ENCODE measurements at regions of chr17 and their contacts with region 1.

Region 1: GRCh38 chr17:40791787-40792436 is 7.8 kb downstream of the KRT28 start:
- DNase-seq: peak; percentile 9
- H3K4me3 ChIP-seq: no peak overlapping the region
- H3K27ac ChIP-seq: no peak overlapping the region
- H3K4me1 ChIP-seq: no peaks in the 10 kb centered on the region
- H3K27me3 ChIP-seq: peaks cover 4% of the 10 kb centered on the region
- CTCF ChIP-seq: peak; percentile 71 to 82

Region 2: DNA sequence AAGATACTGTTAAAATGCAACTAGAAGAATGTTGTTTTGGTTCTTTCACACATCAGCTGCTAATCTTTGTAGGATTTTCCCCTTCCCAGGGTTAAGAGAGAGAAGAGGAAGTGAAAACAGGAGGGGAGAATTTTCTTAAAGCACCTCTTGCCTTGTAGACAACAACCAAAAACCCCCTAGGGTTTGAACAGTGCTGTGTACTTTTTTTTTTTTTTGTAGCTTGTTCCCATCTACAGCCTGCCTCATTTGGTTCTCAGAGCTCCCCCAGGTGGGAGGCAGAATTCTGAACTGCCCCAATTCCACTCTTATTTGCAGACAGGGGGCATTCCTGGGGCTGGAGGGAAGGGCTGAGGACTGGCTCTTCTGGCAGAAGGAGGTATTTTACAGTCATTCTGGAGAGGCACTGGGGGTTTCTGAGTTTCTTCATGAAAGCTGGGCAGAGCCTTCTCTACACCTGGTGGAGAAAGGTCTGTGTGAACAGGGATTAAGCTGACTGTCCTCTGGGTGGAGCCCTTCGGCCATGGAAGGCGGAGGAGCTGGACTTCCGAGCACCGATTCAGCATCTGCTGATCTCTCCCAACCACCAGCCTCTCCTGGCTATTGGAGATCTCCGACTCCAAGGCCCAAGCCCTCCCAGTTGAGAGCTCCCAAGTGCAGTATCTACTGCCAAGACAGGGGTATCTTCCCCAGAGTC is 176.5 kb before region 1 on chr17:
- CTCF ChIA-PET with region 1: interaction called, 3 read pairs
- dilution Hi-C with region 1: no loop called
- in situ Hi-C with region 1: loop called (anchors 5 kb)
- intact Hi-C with region 1: loop called (anchors 1 kb)
- DNase-seq: peak; percentile 67
- H3K4me3 ChIP-seq: no peak overlapping the region
- H3K27ac ChIP-seq: no peak overlapping the region
- H3K4me1 ChIP-seq: no peaks in the 10 kb centered on the region
- H3K27me3 ChIP-seq: no peaks in the 10 kb centered on the region
- CTCF ChIP-seq: peak; percentile 59 to 68

Region 3: DNA sequence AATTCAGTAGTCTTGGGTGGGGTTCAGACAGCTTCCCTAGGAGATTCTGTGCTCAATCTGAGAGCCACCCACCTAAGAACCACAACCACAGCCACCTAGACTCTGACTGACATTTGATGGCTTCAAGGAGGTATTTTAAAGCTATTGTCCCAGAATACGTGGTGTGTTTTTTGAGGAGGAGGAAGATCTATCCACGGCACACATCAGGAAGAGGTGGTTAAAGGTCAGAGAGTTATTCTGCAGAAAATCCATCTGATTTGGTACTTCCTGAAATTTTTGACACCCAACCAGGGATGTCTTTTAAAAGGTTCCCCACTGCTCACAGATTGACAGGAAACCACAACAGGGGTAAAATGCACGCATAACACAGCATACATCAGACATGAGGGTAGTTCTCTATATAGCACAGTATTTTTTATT is 169.4 kb before region 1 on chr17:
- CTCF ChIA-PET with region 1: interaction called, 3 read pairs
- dilution Hi-C with region 1: no loop called
- in situ Hi-C with region 1: loop called (anchors 5 kb)
- intact Hi-C with region 1: loop called (anchors 1 kb)
- DNase-seq: no peak
- H3K4me3 ChIP-seq: no peak overlapping the region
- H3K27ac ChIP-seq: no peak overlapping the region
- H3K4me1 ChIP-seq: peaks cover 2% of the 10 kb centered on the region
- H3K27me3 ChIP-seq: no peaks in the 10 kb centered on the region
- CTCF ChIP-seq: no peak

Measured in mammary epithelial cell (primary cell).